Esophagus squamous epithelium (tissue), 5 donors: ENCODE measurements at regions of chr13 and their contacts with region 1.

Region 1: GRCh38 chr13:41960639-41961465 is at the start of gene VWA8:
- DNase-seq: no peak
- H3K4me3 ChIP-seq: peak within 1 kb of the TSS; percentile 73 to 91 (median 82)
- H3K27ac ChIP-seq: peak within 1 kb of the TSS; percentile 86 to 91 (median 90)
- H3K4me1 ChIP-seq: peaks cover 0 to 52% (median 9%) of the 10 kb centered on the region in 3 donors
- H3K27me3 ChIP-seq: no peaks in the 10 kb centered on the region
- CTCF ChIP-seq: no peak
- POLR2A ChIP-seq: peak in 1 of 4 donors; percentile 20
- total RNA-seq, gene VWA8: 10.5 to 23.7 (median 17.3) TPM

Region 2: DNA sequence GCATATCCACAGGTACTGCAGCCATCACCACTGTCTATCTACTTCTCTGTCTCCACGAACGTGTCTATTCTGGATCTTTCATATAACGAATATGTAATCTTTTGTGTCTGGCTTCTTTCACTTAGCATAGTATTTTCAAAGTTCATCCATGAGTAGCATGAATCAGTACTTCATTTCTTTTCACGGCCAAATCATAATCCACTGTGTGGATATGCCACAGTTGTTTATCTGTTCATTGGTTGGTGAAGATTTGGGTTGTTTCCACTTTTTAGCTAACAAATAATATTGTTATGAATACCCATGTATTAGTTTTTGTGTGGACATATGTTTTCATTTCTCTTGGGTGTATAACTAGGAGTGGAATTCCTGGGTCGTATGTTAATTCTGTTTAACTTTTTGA is 489.1 kb before region 1 on chr13:
- intact Hi-C with region 1: no loop called
- DNase-seq: no peak
- H3K4me3 ChIP-seq: no peak overlapping the region
- H3K27ac ChIP-seq: no peak overlapping the region
- H3K4me1 ChIP-seq: peaks cover 0 to 20% (median 1%) of the 10 kb centered on the region in 3 donors
- H3K27me3 ChIP-seq: no peaks in the 10 kb centered on the region
- CTCF ChIP-seq: no peak
- POLR2A ChIP-seq: no peak

Region 3: GRCh38 chr13:41577436-41577835 is 383.4 kb before region 1 on chr13:
- intact Hi-C with region 1: no loop called
- DNase-seq: no peak
- H3K4me3 ChIP-seq: peak overlapping the region in 1 of 4 donors; percentile 19
- H3K27ac ChIP-seq: no peak overlapping the region
- H3K4me1 ChIP-seq: no peaks in the 10 kb centered on the region
- H3K27me3 ChIP-seq: no peaks in the 10 kb centered on the region
- CTCF ChIP-seq: no peak
- POLR2A ChIP-seq: no peak

Region 4: GRCh38 chr13:42039946-42040729 is 79.3 kb after region 1 on chr13:
- intact Hi-C with region 1: loop called (anchors 10 kb)
- DNase-seq: peak; percentile 48
- H3K4me3 ChIP-seq: peak overlapping the region; percentile 70 to 94 (median 80)
- H3K27ac ChIP-seq: peak overlapping the region; percentile 93 to 98 (median 96)
- H3K4me1 ChIP-seq: peaks cover 0 to 26% (median 5%) of the 10 kb centered on the region in 3 donors
- H3K27me3 ChIP-seq: no peaks in the 10 kb centered on the region
- CTCF ChIP-seq: peak in 1 of 6 experiments; percentile 5
- POLR2A ChIP-seq: peak in 3 of 4 donors; percentile 59 to 94 (median 89)

Region 5: DNA sequence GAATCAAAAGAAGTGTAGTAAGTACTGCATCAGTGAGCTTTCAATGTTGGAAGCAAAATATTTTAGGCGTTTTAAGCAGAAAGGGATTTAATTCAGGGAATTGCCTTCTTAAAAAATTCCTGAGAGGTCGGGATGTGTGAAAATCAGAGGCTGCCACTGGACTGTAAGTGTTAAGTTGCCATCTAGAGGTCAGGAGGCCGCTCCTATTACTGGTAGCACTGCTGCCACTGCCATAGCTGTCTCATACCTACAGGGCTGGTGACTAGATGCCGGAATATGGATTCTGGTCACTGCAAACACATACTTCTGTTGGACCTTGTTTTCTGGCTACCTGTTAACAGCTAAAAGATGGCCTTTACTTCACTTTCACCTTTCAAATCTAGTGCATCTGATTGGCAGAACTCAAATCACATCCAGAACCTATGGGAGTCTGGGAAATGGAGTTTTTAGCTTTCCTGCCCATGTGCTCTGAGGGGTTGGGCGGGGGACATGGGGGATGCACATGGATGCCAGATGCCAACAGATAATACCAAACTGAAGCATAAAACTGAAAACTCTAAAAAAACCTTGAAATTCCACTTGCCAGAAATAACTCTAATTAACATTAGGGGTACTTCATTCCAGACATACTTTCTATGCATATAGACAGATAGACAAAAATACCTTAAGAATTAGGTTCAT is 117.4 kb after region 1 on chr13:
- intact Hi-C with region 1: no loop called
- DNase-seq: no peak
- H3K4me3 ChIP-seq: no peak overlapping the region
- H3K27ac ChIP-seq: no peak overlapping the region
- H3K4me1 ChIP-seq: no peaks in the 10 kb centered on the region
- H3K27me3 ChIP-seq: no peaks in the 10 kb centered on the region
- CTCF ChIP-seq: no peak
- POLR2A ChIP-seq: no peak

Region 6: DNA sequence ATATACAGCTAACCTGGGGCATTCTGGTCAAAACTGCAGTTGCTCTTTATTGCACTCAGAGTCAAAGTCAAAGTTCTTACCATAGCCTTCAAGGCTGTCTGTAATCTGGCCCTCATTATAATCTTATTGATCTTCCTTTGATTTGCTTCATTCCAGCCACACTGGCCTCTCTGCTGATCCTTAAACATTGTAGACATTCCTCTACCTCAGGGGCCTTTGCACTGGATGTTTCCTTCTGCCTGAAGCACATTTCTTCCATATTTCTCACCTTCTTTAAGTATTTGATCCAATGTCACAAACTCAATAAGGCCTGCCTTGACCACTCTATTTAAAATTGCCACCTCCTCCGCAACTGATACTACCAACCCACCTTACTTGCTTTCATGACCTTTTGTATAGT is 471.9 kb after region 1 on chr13:
- intact Hi-C with region 1: no loop called
- DNase-seq: no peak
- H3K4me3 ChIP-seq: no peak overlapping the region
- H3K27ac ChIP-seq: no peak overlapping the region
- H3K4me1 ChIP-seq: no peaks in the 10 kb centered on the region
- H3K27me3 ChIP-seq: no peaks in the 10 kb centered on the region
- CTCF ChIP-seq: no peak
- POLR2A ChIP-seq: no peak